Activated CD4-positive, alpha-beta memory T cell treated with anti-CD3 and anti-CD28 coated beads for 36 hours (primary cell): ENCODE measurements at regions of chr7 and their contacts with region 1.

Region 1: DNA sequence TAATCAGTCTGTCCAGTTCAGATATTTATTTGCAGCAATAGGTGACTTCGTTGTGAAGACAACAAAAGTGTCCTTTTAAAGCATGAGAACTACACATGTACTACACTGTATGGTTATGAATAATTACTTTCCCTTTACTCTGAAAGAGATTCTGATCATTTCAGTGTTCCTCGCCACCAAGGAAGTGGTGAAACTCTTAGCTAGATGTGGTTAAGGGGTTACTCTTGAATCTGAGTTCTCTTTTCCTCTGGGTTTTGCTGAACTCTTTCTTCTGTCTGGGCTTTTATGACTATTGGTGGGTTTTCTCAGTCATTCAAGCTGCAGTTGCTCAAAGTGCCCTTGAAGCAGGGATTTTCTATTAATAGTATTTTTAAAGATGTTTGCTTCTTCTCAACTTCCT is 127.9 kb upstream of the SEM1 start:
- DNase-seq: peak; percentile 26
- H3K4me3 Mint-ChIP-seq: peak overlapping the region; percentile 14
- H3K27ac Mint-ChIP-seq: no peak overlapping the region
- H3K4me1 Mint-ChIP-seq: peaks cover 31% of the 10 kb centered on the region
- H3K27me3 Mint-ChIP-seq: peaks cover 47% of the 10 kb centered on the region

Region 2: DNA sequence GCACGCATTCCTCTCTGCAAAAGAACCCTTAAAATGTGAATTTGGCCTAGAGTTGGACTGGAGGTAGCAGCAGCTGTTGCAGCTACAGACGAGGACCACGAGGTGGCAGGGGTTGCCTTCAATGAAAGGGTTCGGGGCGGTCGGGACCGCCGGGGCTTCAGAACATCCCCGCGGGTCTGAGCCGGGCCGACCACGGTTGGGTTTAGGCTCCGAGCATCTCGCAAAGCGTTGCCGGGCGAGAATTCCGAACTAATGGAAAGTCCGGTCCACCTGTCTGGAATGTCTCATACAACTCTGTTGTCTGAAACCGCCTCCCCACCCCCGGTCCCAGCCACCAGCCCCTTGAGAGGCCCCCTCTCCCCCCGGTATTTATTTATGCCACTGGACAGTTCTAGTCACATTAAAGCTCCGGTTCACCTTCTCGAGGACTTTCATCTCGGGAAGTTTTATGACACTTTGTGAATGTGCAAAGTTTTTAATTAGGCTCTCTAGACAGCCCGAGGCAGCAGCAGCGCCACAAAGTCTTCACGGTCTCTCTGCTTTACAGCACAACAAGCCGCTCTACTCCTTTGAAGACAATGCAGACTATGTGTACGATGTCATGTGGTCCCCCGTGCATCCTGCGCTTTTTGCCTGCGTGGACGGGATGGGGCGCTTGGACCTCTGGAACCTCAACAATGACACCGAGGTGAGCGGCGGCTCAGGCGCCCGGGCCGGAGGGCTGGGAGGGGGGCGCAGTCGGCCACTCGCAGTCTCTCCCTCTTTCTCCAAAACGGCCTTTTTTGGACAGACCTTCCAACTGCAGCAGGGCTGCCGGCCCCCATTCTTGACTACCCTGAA is 761.9 kb before region 1 on chr7:
- CTCF ChIA-PET with region 1: no interaction called
- POLR2A ChIA-PET with region 1: no interaction called
- intact Hi-C with region 1: loop called (anchors 5 kb)
- DNase-seq: peak; percentile 58
- H3K4me3 Mint-ChIP-seq: peak overlapping the region; percentile 53
- H3K27ac Mint-ChIP-seq: no peak overlapping the region
- H3K4me1 Mint-ChIP-seq: peaks cover 7% of the 10 kb centered on the region
- H3K27me3 Mint-ChIP-seq: peaks cover 20% of the 10 kb centered on the region

Region 3: DNA sequence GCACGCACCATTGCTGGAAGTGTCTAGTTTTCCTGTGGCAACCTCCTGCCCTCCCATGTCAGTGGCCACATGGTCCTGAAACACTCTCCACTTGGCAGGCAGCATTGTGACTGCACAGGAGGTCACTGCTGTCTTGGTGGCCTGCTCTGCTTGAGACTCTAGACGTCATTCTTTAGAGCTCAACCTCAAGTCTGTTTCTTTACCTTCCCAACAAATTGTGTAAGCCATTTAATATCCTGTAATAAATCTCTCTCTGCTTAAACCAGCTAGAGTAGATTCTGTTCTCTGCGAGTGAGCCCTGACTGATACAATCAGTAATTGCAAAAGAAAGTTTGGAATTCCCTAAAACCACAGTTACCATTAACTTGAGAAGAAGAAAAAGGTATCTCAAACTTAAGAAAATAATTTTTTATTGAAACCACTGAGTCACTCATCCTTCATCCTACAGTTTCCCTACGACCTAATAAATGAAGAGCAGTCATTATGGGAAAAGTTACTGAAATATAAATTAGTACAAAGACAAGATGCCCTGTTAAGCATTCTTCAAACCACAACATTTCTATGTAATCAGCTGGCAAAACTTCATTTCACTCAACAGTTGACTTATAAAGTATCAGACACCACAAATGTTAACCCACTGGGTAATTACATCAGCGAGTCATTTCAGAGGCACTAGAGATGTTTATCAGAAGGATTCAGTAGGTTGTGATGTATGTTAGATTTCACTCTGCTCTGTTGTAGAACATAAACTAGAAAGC is 533.7 kb before region 1 on chr7:
- CTCF ChIA-PET with region 1: no interaction called
- POLR2A ChIA-PET with region 1: no interaction called
- intact Hi-C with region 1: loop called (anchors 1 kb)
- DNase-seq: no peak
- H3K4me3 Mint-ChIP-seq: peak overlapping the region; percentile 23
- H3K27ac Mint-ChIP-seq: peak overlapping the region; percentile 71
- H3K4me1 Mint-ChIP-seq: peaks cover 52% of the 10 kb centered on the region
- H3K27me3 Mint-ChIP-seq: no peaks in the 10 kb centered on the region

Region 4: DNA sequence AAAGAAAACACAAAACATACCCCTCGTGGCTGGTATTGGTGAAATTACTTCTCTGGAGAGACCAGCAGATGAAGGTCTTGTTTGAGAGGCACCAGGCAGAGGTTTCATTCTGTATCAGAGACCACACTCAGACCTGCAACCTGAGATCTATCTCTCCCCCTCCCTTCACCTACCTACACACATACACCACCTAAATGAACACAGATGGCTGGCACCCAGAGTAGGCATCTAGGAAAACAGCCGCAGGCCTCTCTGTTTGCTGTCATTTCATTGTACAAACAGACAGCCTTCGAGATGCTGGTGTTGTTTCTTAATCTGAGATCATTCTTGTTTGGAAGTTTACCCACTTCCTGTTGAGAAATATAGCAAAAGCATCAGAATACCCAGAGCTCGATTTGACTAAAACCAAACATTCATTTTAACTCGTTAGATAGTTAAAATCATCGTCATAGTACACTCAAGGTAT is 341.8 kb before region 1 on chr7:
- CTCF ChIA-PET with region 1: no interaction called
- POLR2A ChIA-PET with region 1: no interaction called
- intact Hi-C with region 1: loop called (anchors 1 kb)
- DNase-seq: peak; percentile 64
- H3K4me3 Mint-ChIP-seq: peak overlapping the region; percentile 16
- H3K27ac Mint-ChIP-seq: peak overlapping the region; percentile 49
- H3K4me1 Mint-ChIP-seq: peaks cover 11% of the 10 kb centered on the region
- H3K27me3 Mint-ChIP-seq: peaks cover 3% of the 10 kb centered on the region

Region 5: DNA sequence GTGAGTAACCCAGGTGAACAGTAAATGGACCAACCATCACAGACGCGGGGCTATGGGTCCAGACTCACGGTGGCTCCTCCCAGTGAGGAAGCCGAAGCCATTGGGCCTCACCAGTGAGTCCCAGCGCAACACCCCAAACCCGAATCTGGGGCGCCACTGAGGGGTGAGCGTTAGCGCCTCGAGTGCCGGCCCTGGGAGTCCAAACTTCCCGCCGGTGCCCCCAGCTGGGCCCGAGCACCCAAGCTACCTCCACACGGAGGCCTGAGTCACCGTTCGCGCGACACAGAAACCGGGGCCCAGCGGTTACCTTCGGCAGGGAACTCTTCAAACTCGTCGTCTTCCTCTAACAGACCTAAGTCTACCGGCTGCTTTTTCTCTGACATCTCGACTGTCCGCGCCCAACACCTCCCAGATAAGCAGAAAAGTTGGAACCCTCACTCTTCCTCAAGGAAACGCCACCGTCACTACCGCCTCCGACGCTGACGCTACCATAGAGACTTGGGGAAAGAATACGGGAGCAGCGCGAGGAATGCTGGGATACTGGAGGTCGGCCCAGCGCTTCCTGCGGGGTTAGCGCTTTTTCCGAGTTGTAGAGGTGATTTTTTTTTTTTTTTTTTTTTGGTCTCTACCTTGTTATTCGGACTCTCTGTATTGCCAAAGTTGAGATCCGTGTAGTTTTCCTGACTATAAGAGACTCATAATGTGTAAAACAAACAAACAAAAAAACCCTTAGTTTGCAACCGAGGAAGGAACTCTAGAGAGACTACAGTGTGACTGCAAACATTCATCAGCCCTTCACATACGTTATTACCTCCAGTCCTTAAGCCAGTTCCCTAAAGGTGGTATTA is 128.0 kb before region 1 on chr7 and contains the start of gene SEM1:
- CTCF ChIA-PET with region 1: no interaction called
- POLR2A ChIA-PET with region 1: no interaction called
- intact Hi-C with region 1: loop called (anchors 5 kb)
- DNase-seq: peak; percentile 76
- H3K4me3 Mint-ChIP-seq: peak within 1 kb of the TSS; percentile 98
- H3K27ac Mint-ChIP-seq: peak within 1 kb of the TSS; percentile 96
- H3K4me1 Mint-ChIP-seq: peaks cover 23% of the 10 kb centered on the region
- H3K27me3 Mint-ChIP-seq: peaks cover 2% of the 10 kb centered on the region
- total RNA-seq, gene SEM1: 41.6 to 42.4 TPM

Region 6: DNA sequence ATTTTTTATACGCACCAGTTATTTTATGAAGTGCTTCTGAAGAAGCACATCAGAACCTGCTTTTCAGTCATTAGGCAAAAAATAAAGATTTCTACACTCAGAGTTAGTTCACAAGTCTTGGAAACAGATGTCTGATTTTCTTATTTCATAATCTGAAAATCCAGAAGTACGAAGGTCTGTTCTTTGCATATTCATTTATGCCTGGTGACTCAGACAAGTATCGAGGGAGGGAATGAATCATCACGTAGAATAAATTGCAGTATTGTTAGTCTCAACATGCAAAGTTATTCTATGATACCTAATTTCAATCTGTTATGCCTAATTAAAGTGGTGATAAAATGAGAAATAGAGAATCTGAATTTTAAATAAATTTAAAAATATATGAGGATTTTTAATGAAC is 14.3 kb before region 1 on chr7:
- CTCF ChIA-PET with region 1: interaction called, 5 read pairs
- POLR2A ChIA-PET with region 1: no interaction called
- intact Hi-C with region 1: loop called (anchors 1 kb)
- DNase-seq: no peak
- H3K4me3 Mint-ChIP-seq: no peak overlapping the region
- H3K27ac Mint-ChIP-seq: no peak overlapping the region
- H3K4me1 Mint-ChIP-seq: peaks cover 4% of the 10 kb centered on the region
- H3K27me3 Mint-ChIP-seq: peaks cover 41% of the 10 kb centered on the region